Ascending aorta (tissue), 2 donors: ENCODE measurements at regions of chr4 and their contacts with region 1.

Region 1: DNA sequence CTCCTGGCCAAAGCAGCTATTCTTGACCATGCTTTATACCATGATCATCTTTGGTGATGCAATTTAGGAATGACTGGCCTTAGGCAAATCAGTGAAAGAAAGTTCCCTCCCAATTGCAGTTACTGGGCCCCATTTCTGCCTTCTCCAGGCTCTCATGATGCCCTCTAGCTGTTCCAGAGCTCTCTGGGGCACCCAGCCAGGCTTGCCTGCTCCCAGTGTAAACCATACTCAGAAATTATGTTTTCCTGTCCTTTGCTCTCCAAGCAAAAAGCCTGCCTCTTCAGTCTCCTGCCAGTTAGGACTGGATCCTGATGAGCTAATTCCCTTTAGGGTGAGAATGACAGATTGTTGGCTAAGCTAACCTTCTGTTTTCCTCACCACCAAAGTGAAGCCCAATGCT is 85.3 kb upstream of the RBPJ start:
- DNase-seq: peak in 1 of 2 donors; percentile 87
- H3K4me3 ChIP-seq: no peak overlapping the region
- H3K27ac ChIP-seq: peak overlapping the region; percentile 34 to 58
- H3K4me1 ChIP-seq: peaks cover 0 to 19% of the 10 kb centered on the region in 2 donors
- H3K27me3 ChIP-seq: no peaks in the 10 kb centered on the region
- CTCF ChIP-seq: peak in 1 of 3 experiments; percentile 22

Region 2: GRCh38 chr4:26093551-26093950 is 141.9 kb before region 1 on chr4:
- intact Hi-C with region 1: loop called (anchors 5 kb)
- DNase-seq: peak in 1 of 2 donors; percentile 74
- H3K4me3 ChIP-seq: no peak overlapping the region
- H3K27ac ChIP-seq: peak overlapping the region; percentile 62 to 66
- H3K4me1 ChIP-seq: peaks cover 0 to 6% of the 10 kb centered on the region in 2 donors
- H3K27me3 ChIP-seq: no peaks in the 10 kb centered on the region
- CTCF ChIP-seq: no peak